ENCODE measurements at regions of chr1 and their contacts with region 1.

Region 1: GRCh38 chr1:156282479-156283222 is at the start of gene SMG5:
- DNase-seq: peak; percentile 94
- H3K4me3 Mint-ChIP-seq: peak within 1 kb of the TSS; percentile 91
- H3K27ac Mint-ChIP-seq: peak within 1 kb of the TSS; percentile 93
- H3K4me1 Mint-ChIP-seq: peaks cover 44% of the 10 kb centered on the region
- H3K27me3 Mint-ChIP-seq: peaks cover 1% of the 10 kb centered on the region
- total RNA-seq, gene SMG5: 95.6 TPM in 2 replicates

Region 2: DNA sequence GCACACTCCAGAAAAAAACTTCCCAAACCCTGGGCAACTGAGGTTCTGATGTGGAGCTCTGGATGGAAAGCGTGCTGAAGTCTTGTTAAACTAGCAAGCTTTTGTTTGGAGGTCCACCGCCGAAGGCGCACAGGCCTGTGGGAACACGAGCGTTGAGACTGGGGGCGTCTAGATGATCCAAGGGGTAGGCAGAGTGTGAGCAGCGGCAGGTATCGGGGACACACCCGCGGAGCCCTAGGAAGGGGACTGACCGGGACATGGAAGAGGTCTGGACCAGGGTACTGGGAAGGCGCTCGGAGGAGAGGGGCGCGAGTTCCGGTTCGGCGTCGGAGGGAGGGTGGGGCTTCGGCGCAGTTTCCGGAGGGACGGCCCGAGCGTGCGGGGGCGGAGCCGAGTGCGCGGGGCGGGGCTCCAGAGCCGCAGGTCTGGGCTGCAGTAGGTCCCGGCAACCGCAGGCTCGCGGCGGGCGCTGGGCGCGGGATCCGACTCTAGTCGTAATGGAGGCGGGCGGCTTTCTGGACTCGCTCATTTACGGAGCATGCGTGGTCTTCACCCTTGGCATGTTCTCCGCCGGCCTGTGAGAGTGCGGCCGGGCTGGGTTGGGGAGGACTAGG is 1147.1 kb before region 1 on chr1 and contains the start of gene SLC50A1:
- intact Hi-C with region 1: loop called (anchors 5 kb)
- DNase-seq: peak; percentile 91
- H3K4me3 Mint-ChIP-seq: peak within 1 kb of the TSS; percentile 94
- H3K27ac Mint-ChIP-seq: peak within 1 kb of the TSS; percentile 99
- H3K4me1 Mint-ChIP-seq: peaks cover 42% of the 10 kb centered on the region
- H3K27me3 Mint-ChIP-seq: peaks cover 5% of the 10 kb centered on the region
- total RNA-seq, gene SLC50A1: 45.7 and 47.7 TPM in 2 replicates

Region 3: DNA sequence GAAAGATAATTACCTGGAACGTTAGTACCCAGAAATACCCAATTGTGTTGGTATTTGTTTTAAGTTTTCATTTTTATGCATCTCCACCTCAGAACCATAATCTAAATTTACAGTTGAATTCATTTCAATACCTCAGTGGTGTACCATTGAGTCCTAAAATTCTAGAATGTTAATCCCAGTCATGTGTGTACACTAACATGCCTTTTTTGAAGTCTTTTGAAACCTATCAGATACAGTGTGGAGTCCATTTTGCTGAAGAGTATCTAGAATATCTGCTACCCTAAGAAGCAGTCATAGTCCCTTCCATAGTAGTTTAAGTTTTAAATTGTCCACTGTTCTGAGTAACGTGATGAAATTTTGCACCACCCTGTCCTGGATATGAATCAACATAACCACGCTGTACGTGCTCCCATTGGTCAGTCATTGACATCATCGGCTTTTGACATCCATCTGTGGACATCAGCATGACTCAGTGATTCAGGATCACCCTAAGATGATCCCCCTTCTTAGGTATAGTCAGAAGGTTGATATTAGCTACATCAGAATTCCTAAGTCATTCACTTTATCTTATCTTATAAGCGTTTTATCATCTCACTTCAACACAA is 712.6 kb before region 1 on chr1:
- intact Hi-C with region 1: no loop called
- DNase-seq: no peak
- H3K4me3 Mint-ChIP-seq: no peak overlapping the region
- H3K27ac Mint-ChIP-seq: no peak overlapping the region
- H3K4me1 Mint-ChIP-seq: peaks cover 7% of the 10 kb centered on the region
- H3K27me3 Mint-ChIP-seq: no peaks in the 10 kb centered on the region

Region 4: DNA sequence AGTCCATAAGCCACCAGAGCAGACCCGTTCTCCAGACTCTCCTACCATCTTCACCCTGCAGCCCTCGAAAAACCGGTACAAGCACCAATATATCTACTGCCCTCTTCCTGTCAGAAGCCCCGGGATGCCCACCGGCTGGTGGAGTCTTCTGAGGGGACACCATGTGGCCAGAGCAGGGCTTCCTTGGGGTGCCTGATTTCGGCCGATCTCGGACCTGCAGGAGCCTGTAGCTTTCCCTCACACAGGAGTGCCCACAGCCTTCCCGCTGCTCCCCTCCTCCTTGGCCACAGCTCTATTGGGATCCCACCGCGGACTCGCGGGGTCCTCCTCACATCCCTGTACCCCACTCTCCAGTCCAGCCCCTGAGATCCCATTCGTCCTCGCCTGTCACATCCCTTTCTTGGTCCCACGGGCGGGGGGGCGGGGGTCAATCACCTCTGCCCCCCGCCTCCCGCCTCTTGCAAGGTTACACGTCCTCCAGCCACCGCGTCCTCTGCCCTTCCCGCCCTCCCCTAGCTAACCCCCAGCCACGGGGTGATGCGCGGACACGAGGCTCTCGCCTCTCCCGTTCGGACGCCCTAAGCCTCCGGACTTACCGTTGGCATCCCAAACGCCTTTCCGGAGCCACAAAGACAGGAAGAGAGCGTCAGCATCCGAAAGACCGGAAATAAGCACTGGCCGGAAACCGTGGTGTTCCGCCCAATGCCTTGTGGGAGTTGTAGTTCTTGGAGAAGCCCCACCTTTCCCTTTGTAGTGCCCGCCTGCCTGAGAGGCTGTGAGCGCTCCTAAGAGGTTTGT is 262.2 kb before region 1 on chr1 and contains the start of gene SSR2:
- intact Hi-C with region 1: loop called (anchors 1 kb)
- DNase-seq: peak; percentile 85
- H3K4me3 Mint-ChIP-seq: peak within 1 kb of the TSS; percentile 98
- H3K27ac Mint-ChIP-seq: peak within 1 kb of the TSS; percentile 94
- H3K4me1 Mint-ChIP-seq: peaks cover 29% of the 10 kb centered on the region
- H3K27me3 Mint-ChIP-seq: peaks cover 4% of the 10 kb centered on the region
- total RNA-seq, gene SSR2: 195 TPM in 2 replicates

Region 5: DNA sequence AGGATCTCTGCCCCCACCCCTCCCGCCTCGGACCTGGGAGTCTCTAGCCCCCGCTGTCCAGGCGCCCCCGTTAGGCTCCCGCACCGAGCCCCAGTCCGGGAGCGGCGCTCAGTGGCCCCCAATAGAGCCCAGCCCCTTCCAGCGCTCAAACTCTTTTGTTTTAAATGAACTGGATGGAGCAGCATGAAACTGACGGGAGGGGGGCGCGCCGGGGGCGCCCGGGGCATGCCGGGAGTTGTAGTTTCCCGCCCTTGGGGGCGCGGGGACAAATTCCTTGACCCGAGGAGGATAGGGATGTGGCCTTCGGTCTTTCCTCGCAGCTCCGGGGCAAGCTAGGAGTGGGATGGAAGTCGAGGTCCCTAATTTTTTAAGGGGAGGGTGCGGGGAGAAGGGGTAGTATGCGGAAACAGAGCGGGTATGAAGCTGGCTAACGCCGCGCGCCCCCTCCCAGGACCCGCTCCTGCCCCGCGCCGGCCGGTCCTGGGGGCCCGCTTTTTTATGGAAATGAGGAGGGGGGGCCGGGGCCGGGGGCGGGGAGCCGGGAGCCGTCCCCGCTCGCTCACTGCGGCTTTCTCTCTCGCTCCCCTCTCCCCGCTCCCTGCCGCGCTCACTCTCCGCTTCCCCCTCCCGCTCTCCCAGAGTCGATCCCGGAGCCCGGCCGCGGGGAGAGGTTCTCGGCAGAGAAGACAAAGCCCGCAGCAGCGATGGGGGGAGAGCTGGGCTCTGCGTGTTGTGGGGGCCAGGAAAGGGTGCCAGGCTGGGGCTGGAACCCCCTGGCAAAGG is 200.2 kb before region 1 on chr1 and contains the start of gene MEX3A:
- intact Hi-C with region 1: no loop called
- DNase-seq: peak; percentile 42
- H3K4me3 Mint-ChIP-seq: peak within 1 kb of the TSS; percentile 82
- H3K27ac Mint-ChIP-seq: no peak within 1 kb of the TSS
- H3K4me1 Mint-ChIP-seq: peaks cover 5% of the 10 kb centered on the region
- H3K27me3 Mint-ChIP-seq: peaks cover 76% of the 10 kb centered on the region
- total RNA-seq, gene MEX3A: 0.27 and 0.41 TPM in 2 replicates

Region 6: GRCh38 chr1:156212833-156213643 is 69.6 kb before region 1 on chr1 and contains the start of gene PMF1:
- intact Hi-C with region 1: loop called (anchors 1 kb)
- DNase-seq: peak; percentile 93
- H3K4me3 Mint-ChIP-seq: peak within 1 kb of the TSS; percentile 92
- H3K27ac Mint-ChIP-seq: peak within 1 kb of the TSS; percentile 97
- H3K4me1 Mint-ChIP-seq: peaks cover 53% of the 10 kb centered on the region
- H3K27me3 Mint-ChIP-seq: no peaks in the 10 kb centered on the region
- total RNA-seq, gene PMF1: 105 and 111 TPM in 2 replicates

Region 7: DNA sequence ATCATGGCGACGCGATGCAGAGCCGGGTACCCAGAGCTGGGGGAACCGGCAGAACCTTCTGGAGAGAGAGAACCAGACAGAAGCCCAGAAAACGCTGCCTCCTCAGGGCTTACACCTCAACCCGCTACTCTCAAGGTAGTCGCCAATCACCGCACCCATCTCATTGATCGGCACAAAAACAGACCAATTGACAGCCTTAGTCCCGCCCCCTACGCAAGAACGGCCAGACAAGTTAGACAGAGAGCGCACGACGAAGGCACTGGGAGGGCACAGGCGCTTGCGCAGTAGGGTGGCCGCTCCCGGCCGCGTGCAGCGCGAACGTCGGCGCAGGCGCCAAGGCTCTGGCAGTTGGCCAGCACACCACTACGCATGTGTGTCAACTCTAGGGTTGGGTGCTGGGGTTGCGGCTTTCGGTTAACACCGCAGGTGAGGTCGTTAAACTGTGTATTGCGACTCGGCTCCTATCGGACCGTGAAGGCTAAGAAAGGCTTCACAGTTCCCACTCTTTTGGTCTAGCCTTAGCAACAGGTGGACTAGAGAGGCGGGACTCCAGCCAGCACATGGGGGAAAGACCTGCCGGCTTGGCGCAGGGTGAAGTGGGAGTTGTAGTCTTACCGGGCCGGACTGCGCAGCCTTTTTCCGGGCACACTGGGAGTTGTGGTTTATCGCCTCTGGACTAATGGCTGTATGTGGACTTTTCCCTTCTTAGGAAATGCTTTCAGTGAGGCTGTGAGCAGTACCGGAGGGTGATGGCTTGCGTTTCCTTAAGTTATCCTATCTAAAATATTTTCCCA is 55.7 kb after region 1 on chr1 and contains the starts of genes CCT3 and TSACC:
- intact Hi-C with region 1: loop called (anchors 1 kb)
- DNase-seq: peak; percentile 99
- H3K4me3 Mint-ChIP-seq: peak within 1 kb of the TSS; percentile 98
- H3K27ac Mint-ChIP-seq: peak within 1 kb of the TSS; percentile 95
- H3K4me1 Mint-ChIP-seq: peaks cover 41% of the 10 kb centered on the region
- H3K27me3 Mint-ChIP-seq: peaks cover 5% of the 10 kb centered on the region
- total RNA-seq, gene CCT3: 567 and 570 TPM in 2 replicates
- total RNA-seq, gene TSACC: 0.81 TPM in 1 of 2 replicates, not detected in the other

Region 8: GRCh38 chr1:156767101-156767878 is 484.6 kb after region 1 on chr1 and contains the start of gene PRCC:
- intact Hi-C with region 1: loop called (anchors 2 kb)
- DNase-seq: peak; percentile 97
- H3K4me3 Mint-ChIP-seq: no peak within 1 kb of the TSS
- H3K27ac Mint-ChIP-seq: no peak within 1 kb of the TSS
- H3K4me1 Mint-ChIP-seq: peaks cover 46% of the 10 kb centered on the region
- H3K27me3 Mint-ChIP-seq: no peaks in the 10 kb centered on the region
- total RNA-seq, gene PRCC: 117 TPM in 2 replicates

Measured in activated T-helper 1 cell treated with anti-CD3 and anti-CD28 coated beads, Interleukin-12 subunit alpha, Interleukin-12 subunit beta, Interleukin-2, Interleukin-4 antibody, amounts not matched to agents 30 ng/mL and 10 ng/mL and 1 ng/mL, durations not matched to agents 14 hours and 24 hours and 36 hours (primary cell).